Ovary (tissue), 10 donors: ENCODE measurements at regions of chr11 and their contacts with region 1.

Region 1: GRCh38 chr11:72026090-72026489 is 27.4 kb downstream of the IL18BP start:
- DNase-seq: no peak
- H3K4me3 ChIP-seq: no peak overlapping the region
- H3K27ac ChIP-seq: no peak overlapping the region
- H3K4me1 ChIP-seq: peaks cover 5% of the 10 kb centered on the region
- H3K27me3 ChIP-seq: no peaks in the 10 kb centered on the region
- CTCF ChIP-seq: no peak
- EP300 ChIP-seq: no peak
- POLR2A ChIP-seq: no peak

Region 2: GRCh38 chr11:71406681-71407080 is 619.4 kb before region 1 on chr11:
- intact Hi-C with region 1: no loop called
- DNase-seq: no peak
- H3K4me3 ChIP-seq: no peak overlapping the region
- H3K27ac ChIP-seq: no peak overlapping the region
- H3K4me1 ChIP-seq: no peaks in the 10 kb centered on the region
- H3K27me3 ChIP-seq: no peaks in the 10 kb centered on the region
- CTCF ChIP-seq: no peak
- EP300 ChIP-seq: no peak
- POLR2A ChIP-seq: no peak

Region 3: DNA sequence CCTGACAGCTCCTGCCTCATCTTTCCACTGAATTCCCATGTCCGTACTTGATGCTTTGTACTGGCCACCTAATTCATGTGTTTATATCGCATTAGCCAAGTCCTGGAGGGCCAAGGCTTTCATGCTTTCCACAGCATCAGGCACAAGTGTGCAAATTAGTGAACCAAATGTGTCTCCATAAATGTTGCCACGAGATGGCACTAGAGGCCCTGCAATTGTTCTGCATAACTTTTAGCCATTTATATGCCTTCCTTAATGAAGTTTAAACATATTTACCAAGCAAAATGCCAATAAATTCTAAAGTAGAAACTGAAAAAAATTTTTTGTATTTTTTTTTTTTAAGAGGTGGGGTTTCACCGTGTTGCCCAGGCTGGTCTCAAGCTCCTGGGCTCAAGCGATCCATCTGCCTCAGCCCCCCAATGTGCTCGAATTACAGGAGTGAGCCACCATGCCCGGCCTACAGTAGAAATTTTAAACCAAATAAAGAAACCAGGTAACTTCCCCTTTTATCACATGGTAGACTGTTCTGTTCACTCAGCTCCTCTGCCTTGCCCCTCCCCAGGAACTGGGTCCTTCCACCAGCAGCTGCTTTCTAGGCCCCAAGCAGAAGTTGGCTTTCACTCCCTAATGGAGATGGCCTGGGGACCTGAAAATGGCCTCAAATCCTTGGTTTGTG is 48.2 kb before region 1 on chr11:
- intact Hi-C with region 1: no loop called
- DNase-seq: peak in 3 of 5 donors; percentile 34 to 67 (median 55)
- H3K4me3 ChIP-seq: no peak overlapping the region
- H3K27ac ChIP-seq: no peak overlapping the region
- H3K4me1 ChIP-seq: no peaks in the 10 kb centered on the region
- H3K27me3 ChIP-seq: no peaks in the 10 kb centered on the region
- CTCF ChIP-seq: peak in 2 of 3 donors; percentile 67 to 71
- EP300 ChIP-seq: no peak
- POLR2A ChIP-seq: no peak

Region 4: DNA sequence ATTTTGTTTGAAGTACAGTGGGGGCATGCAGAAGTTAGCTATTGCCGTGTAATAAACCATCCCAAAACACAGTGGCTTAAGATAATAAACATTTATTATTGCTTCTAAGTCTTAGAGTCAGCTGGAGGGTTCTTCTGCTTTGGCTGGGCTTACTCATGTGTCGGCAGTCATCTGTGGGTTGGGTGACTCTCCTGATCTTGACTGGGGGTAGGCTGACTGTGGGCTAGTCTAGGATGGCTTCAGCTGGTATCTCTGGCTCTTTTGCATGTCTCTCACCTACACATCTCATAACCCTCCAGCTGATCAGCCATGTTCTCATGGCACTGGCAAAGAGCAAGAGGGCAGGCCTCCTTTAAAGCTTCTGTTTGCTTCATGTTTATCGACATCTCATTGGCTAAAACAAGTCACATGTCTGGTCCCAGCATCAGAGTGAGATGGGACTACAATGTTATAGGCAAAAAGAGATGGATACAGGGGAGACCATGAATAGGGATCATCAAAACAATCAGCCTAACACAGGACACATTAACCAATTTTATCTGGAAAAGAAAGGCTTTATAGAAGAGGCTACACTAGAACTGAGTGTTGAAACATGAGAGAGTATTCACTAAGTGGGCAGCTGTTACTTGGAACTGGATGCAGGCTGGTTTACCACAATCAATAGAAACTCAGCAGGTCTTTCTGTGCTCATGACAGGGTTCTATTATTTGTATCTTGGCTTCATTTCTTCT is 59.7 kb after region 1 on chr11:
- intact Hi-C with region 1: loop called in 3 of 4 experiments (anchors 2 to 5 kb)
- DNase-seq: no peak
- H3K4me3 ChIP-seq: no peak overlapping the region
- H3K27ac ChIP-seq: no peak overlapping the region
- H3K4me1 ChIP-seq: no peaks in the 10 kb centered on the region
- H3K27me3 ChIP-seq: no peaks in the 10 kb centered on the region
- CTCF ChIP-seq: no peak
- EP300 ChIP-seq: no peak
- POLR2A ChIP-seq: no peak

Region 5: GRCh38 chr11:72091005-72091691 is 65.1 kb after region 1 on chr11:
- intact Hi-C with region 1: loop called (anchors 2 to 5 kb)
- DNase-seq: peak; percentile 64 to 76 (median 70)
- H3K4me3 ChIP-seq: no peak overlapping the region
- H3K27ac ChIP-seq: no peak overlapping the region
- H3K4me1 ChIP-seq: no peaks in the 10 kb centered on the region
- H3K27me3 ChIP-seq: no peaks in the 10 kb centered on the region
- CTCF ChIP-seq: peak; percentile 57 to 86 (median 72)
- EP300 ChIP-seq: no peak
- POLR2A ChIP-seq: no peak